ENCODE measurements at regions of chr4 and their contacts with region 1.

Region 1: DNA sequence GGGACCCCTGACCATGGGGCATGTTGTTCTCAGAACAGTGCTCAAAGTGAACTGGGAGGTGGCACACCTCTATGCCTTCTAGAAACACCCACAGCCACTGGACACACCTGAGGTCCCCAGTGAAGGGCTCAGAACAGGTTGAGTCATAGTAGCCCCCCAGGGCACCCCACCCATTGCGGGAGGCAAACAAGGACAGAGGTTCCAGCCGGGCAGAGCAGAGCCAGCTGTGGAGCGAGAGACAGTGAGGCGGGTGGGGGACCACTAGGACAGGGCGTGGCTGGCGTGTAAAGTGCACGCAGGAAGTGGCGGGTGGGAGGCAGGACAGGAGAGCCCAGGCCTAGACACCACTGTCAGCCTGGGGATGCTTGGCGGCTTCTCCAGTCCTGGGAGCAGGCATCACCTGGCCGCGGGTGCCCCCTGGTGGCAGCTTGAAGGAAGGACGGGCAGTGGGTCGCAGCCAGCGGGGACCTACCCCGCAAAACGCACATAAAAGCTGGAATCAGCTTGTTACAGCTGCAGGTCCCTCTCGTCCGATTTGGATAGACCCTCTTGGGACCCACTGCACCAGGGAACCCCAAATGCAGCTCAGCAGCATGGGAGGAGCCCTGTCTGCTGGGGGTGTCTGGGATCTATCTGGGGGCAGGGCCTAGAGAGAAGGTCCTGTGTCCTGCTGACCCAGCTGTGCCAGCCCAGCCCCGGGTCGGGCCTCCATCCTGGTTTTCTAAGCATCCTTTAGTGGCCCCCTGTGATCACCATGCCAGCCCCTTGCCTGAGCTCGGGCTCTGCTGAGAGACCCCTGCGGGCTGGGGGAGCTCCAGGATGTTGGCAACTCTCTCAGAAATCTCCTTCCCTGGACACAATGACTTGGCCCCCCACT is 57.6 kb downstream of the WFS1 start:
- DNase-seq: peak; percentile 73
- H3K4me3 ChIP-seq: no peak overlapping the region
- H3K27ac ChIP-seq: no peak overlapping the region
- H3K4me1 ChIP-seq: no peaks in the 10 kb centered on the region
- H3K27me3 ChIP-seq: no peaks in the 10 kb centered on the region
- CTCF ChIP-seq: peak; percentile 90 to 98 (median 96)
- POLR2A ChIP-seq: no peak

Region 2: GRCh38 chr4:5998333-5998936 is 328.8 kb before region 1 on chr4:
- intact Hi-C with region 1: loop called (anchors 5 kb)
- DNase-seq: peak; percentile 61
- H3K4me3 ChIP-seq: no peak overlapping the region
- H3K27ac ChIP-seq: no peak overlapping the region
- H3K4me1 ChIP-seq: no peaks in the 10 kb centered on the region
- H3K27me3 ChIP-seq: no peaks in the 10 kb centered on the region
- CTCF ChIP-seq: peak; percentile 71 to 90 (median 84)
- POLR2A ChIP-seq: no peak

Region 3: GRCh38 chr4:6250235-6250983 is 76.9 kb before region 1 on chr4:
- intact Hi-C with region 1: loop called (anchors 2 kb)
- DNase-seq: peak; percentile 67
- H3K4me3 ChIP-seq: no peak overlapping the region
- H3K27ac ChIP-seq: no peak overlapping the region
- H3K4me1 ChIP-seq: no peaks in the 10 kb centered on the region
- H3K27me3 ChIP-seq: no peaks in the 10 kb centered on the region
- CTCF ChIP-seq: peak; percentile 81 to 94 (median 89)
- POLR2A ChIP-seq: no peak

Region 4: DNA sequence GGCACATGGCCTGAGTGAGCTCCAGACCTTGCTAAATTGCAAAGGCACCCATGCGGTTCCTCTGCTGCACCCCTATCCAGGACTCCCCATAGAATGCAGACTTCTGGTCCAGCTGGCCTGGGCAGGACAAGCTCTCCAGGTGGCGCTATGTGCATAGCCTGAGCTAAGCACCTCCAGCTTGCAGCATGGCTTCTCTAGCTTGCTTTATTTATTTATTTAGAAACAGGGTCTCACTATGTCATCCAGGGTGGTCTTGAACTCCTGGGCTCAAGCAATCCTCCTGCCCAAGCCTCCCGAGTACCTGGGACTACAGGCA is 63.1 kb before region 1 on chr4:
- intact Hi-C with region 1: loop called (anchors 1 kb)
- DNase-seq: no peak
- H3K4me3 ChIP-seq: no peak overlapping the region
- H3K27ac ChIP-seq: no peak overlapping the region
- H3K4me1 ChIP-seq: no peaks in the 10 kb centered on the region
- H3K27me3 ChIP-seq: no peaks in the 10 kb centered on the region
- CTCF ChIP-seq: peak in 3 of 4 experiments; percentile 13 to 48 (median 43)
- POLR2A ChIP-seq: no peak

Region 5: GRCh38 chr4:6546681-6547447 is 219.6 kb after region 1 on chr4:
- intact Hi-C with region 1: loop called (anchors 1 kb)
- DNase-seq: peak; percentile 33
- H3K4me3 ChIP-seq: no peak overlapping the region
- H3K27ac ChIP-seq: no peak overlapping the region
- H3K4me1 ChIP-seq: no peaks in the 10 kb centered on the region
- H3K27me3 ChIP-seq: no peaks in the 10 kb centered on the region
- CTCF ChIP-seq: peak; percentile 71 to 86 (median 76)
- POLR2A ChIP-seq: no peak